ENCODE measurements at regions of chr5 and their contacts with region 1.

Region 1: GRCh38 chr5:6632917-6633468 is at the starts of genes NSUN2 and SRD5A1:
- DNase-seq: peak; percentile 71
- ATAC-seq: peak; percentile 90
- H3K4me3 ChIP-seq: peak within 1 kb of the TSS; percentile 98
- H3K27ac ChIP-seq: peak within 1 kb of the TSS; percentile 97
- H3K4me1 ChIP-seq: peaks cover 4% of the 10 kb centered on the region; the same call in 1 of the 2 replicates
- H3K27me3 ChIP-seq: no peaks in the 10 kb centered on the region
- CTCF ChIP-seq: no peak
- EP300 ChIP-seq: no peak
- POLR2A ChIP-seq: peak; percentile 93
- RAD21 ChIP-seq: 0 out of 2 replicates have a peak, but pooled peaks have one; percentile 2
- polyA plus RNA-seq, gene NSUN2: 8.0 to 10.8 TPM
- polyA plus RNA-seq, gene SRD5A1: 0.76 to 2.0 TPM

Region 2: GRCh38 chr5:6488021-6488420 is 145.0 kb before region 1 on chr5:
- CTCF ChIA-PET with region 1: no interaction called
- POLR2A ChIA-PET with region 1: no interaction called
- RAD21 ChIA-PET with region 1: interaction called, 3 read pairs
- SMC1A ChIA-PET with region 1: no interaction called
- in situ Hi-C with region 1: no loop called
- intact Hi-C with region 1: loop called (anchors 5 kb)
- DNase-seq: no peak
- ATAC-seq: no peak
- H3K4me3 ChIP-seq: no peak overlapping the region
- H3K27ac ChIP-seq: no peak overlapping the region
- H3K4me1 ChIP-seq: peaks cover 57% of the 10 kb centered on the region
- H3K27me3 ChIP-seq: no peaks in the 10 kb centered on the region
- CTCF ChIP-seq: no peak
- EP300 ChIP-seq: peak in 1 of 2 experiments; percentile 34; a peak in 2 of 4 replicates
- POLR2A ChIP-seq: no peak
- RAD21 ChIP-seq: no peak

Region 3: GRCh38 chr5:6545770-6546690 is 87.0 kb before region 1 on chr5:
- CTCF ChIA-PET with region 1: no interaction called
- POLR2A ChIA-PET with region 1: no interaction called
- RAD21 ChIA-PET with region 1: no interaction called
- SMC1A ChIA-PET with region 1: no interaction called
- in situ Hi-C with region 1: no loop called
- intact Hi-C with region 1: no loop called
- DNase-seq: no peak
- ATAC-seq: no peak
- H3K4me3 ChIP-seq: no peak overlapping the region
- H3K27ac ChIP-seq: no peak overlapping the region
- H3K4me1 ChIP-seq: no peaks in the 10 kb centered on the region
- H3K27me3 ChIP-seq: peaks cover 0 to 1% of the 10 kb centered on the region in 2 experiments; a peak in 1 of 4 replicates
- CTCF ChIP-seq: no peak
- EP300 ChIP-seq: no peak
- POLR2A ChIP-seq: no peak
- RAD21 ChIP-seq: no peak

Region 4: GRCh38 chr5:6712577-6713275 is 79.7 kb after region 1 on chr5:
- CTCF ChIA-PET with region 1: interaction called, 10 read pairs
- POLR2A ChIA-PET with region 1: interaction called, 4 read pairs
- RAD21 ChIA-PET with region 1: interaction called, 6 read pairs
- SMC1A ChIA-PET with region 1: interaction called, 6 read pairs
- in situ Hi-C with region 1: no loop called
- intact Hi-C with region 1: loop called (anchors 1 kb)
- DNase-seq: peak; percentile 72
- ATAC-seq: peak; percentile 72
- H3K4me3 ChIP-seq: peak overlapping the region; percentile 85
- H3K27ac ChIP-seq: peak overlapping the region; percentile 93
- H3K4me1 ChIP-seq: peaks cover 26% of the 10 kb centered on the region
- H3K27me3 ChIP-seq: no peaks in the 10 kb centered on the region
- CTCF ChIP-seq: peak in 1 of 3 experiments; percentile 30; a peak in 2 of 6 replicates
- EP300 ChIP-seq: 0 out of 4 replicates have a peak, but pooled peaks of 1 of the 2 experiments have one; percentile 5
- POLR2A ChIP-seq: peak; percentile 75
- RAD21 ChIP-seq: no peak

Region 5: DNA sequence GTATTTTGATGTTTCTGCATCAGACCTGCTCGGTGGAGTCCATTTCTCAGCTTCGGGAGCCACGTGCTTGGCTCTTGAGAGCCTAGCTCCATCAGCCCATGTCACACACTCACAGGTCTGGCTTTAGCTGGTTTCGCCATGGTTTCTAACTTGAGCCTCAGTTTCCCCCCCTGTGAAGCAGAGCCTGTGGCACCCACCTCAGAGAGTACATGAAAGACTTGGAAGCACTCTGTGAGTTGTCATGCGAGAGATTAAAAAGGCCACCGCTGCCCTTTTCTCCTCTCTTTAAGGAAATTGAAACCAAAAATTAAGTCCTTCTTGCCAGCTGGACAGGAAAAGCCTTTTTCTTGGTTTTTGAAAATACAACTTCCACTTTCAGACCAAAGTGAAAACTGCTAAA is 89.0 kb after region 1 on chr5:
- CTCF ChIA-PET with region 1: interaction called, 10 read pairs
- POLR2A ChIA-PET with region 1: interaction called, 4 read pairs
- RAD21 ChIA-PET with region 1: interaction called, 32 read pairs
- SMC1A ChIA-PET with region 1: interaction called, 6 read pairs
- in situ Hi-C with region 1: no loop called
- intact Hi-C with region 1: no loop called
- DNase-seq: no peak
- ATAC-seq: peak; percentile 38
- H3K4me3 ChIP-seq: peak overlapping the region; percentile 72
- H3K27ac ChIP-seq: peak overlapping the region; percentile 79
- H3K4me1 ChIP-seq: peaks cover 36% of the 10 kb centered on the region
- H3K27me3 ChIP-seq: no peaks in the 10 kb centered on the region
- CTCF ChIP-seq: no peak
- EP300 ChIP-seq: no peak
- POLR2A ChIP-seq: no peak
- RAD21 ChIP-seq: no peak

Region 6: DNA sequence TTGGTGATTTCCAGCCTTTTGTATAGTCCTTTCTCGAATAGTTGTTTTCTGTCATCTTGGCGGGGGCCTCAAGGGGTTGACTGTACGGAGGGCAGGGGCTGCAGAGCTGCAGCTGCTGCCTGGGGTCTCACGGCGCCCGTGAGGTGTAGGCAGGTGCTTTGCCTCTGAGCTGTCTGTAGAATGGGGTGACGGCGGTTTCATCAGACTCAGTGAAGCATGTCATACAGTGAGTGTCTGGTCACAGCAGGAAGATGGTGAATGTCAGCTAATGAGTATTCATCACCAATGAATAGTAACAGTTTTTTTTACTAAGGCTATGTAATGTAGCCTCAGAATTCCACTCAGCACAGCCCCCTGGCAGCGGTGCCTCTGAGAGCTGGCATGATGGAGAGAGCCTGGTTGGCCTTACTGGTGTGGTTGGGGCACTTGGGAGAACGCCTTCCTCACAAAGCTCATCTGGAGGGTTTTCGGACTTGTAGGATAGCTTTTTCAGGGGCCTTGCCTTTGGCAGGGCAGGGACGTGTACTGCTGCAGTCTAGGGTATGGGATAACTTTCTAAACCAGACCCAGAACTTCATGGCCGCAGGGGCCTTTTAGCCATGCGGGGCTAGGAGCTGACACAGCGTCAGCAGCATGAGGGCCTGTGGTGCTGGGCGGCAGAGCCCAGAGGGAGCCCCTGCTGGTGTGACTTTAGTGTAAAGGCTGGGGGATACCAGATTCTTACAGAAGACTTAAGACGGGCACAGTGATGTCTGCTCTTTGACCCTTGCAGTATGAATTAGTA is 95.2 kb after region 1 on chr5:
- CTCF ChIA-PET with region 1: interaction called, 6 read pairs
- POLR2A ChIA-PET with region 1: interaction called, 4 read pairs
- RAD21 ChIA-PET with region 1: interaction called, 32 read pairs
- SMC1A ChIA-PET with region 1: interaction called, 24 read pairs
- in situ Hi-C with region 1: no loop called
- intact Hi-C with region 1: no loop called
- DNase-seq: no peak
- ATAC-seq: peak; percentile 89
- H3K4me3 ChIP-seq: peak overlapping the region; percentile 31
- H3K27ac ChIP-seq: peak overlapping the region; percentile 84
- H3K4me1 ChIP-seq: peaks cover 64% of the 10 kb centered on the region
- H3K27me3 ChIP-seq: no peaks in the 10 kb centered on the region
- CTCF ChIP-seq: no peak
- EP300 ChIP-seq: peak; percentile 64 to 91
- POLR2A ChIP-seq: 0 out of 2 replicates have a peak, but pooled peaks have one; percentile 15
- RAD21 ChIP-seq: no peak